ENCODE measurements at regions of chr10 and their contacts with region 1.

Region 1: GRCh38 chr10:45373576-45374349 is at the start of gene ALOX5:
- DNase-seq: peak; percentile 74
- ATAC-seq: peak; percentile 64
- H3K4me3 ChIP-seq: peak within 1 kb of the TSS; percentile 71 to 81 (median 77)
- H3K4me3 Mint-ChIP-seq: peak within 1 kb of the TSS; percentile 96
- H3K27ac ChIP-seq: peak within 1 kb of the TSS; percentile 78 to 89
- H3K27ac Mint-ChIP-seq: peak within 1 kb of the TSS; percentile 95
- H3K4me1 ChIP-seq: peaks cover 78 to 85% of the 10 kb centered on the region in 2 donors
- H3K4me1 Mint-ChIP-seq: peaks cover 89% of the 10 kb centered on the region
- H3K27me3 ChIP-seq: no peaks in the 10 kb centered on the region
- H3K27me3 Mint-ChIP-seq: no peaks in the 10 kb centered on the region
- CTCF ChIP-seq: no peak
- total RNA-seq, gene ALOX5: 351 and 354 TPM in 2 replicates

Region 2: DNA sequence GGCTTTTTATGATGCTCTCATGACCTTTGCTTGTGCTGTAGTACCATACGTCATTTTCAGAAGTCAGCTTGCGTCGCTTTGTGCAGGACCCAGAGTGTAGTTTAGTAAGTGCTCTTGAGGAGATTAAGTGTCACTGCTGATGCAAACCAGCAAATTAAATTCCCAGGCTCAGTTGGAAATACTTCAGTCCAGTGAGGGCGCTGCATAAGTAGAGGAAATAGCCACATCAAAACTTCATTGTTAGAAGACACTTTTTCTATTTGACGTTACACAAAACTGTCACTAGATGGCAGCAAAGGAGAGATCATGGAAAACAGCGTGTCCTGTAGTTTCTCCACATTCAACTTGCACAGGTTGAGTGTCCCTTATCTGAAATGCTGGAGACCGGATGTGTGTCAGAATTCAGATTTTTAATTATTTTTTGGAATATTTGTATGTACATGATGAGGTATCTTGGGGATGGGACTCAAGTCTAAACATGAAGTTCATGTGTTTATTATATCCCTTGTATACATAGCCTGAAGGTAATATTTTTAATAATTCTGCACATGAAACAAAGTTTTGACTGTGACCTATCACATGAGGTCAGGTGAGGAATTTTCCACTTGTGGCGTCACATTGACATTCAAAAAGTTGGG is 365.1 kb before region 1 on chr10:
- CTCF ChIA-PET with region 1: no interaction called
- POLR2A ChIA-PET with region 1: no interaction called
- intact Hi-C with region 1: loop called (anchors 10 kb)
- DNase-seq: peak; percentile 71
- ATAC-seq: peak; percentile 58
- H3K4me3 ChIP-seq: no peak overlapping the region
- H3K4me3 Mint-ChIP-seq: no peak overlapping the region
- H3K27ac ChIP-seq: no peak overlapping the region
- H3K27ac Mint-ChIP-seq: no peak overlapping the region
- H3K4me1 ChIP-seq: peaks cover 0 to 4% of the 10 kb centered on the region in 2 donors
- H3K4me1 Mint-ChIP-seq: peaks cover 2% of the 10 kb centered on the region
- H3K27me3 ChIP-seq: no peaks in the 10 kb centered on the region
- H3K27me3 Mint-ChIP-seq: no peaks in the 10 kb centered on the region
- CTCF ChIP-seq: peak; percentile 88

Region 3: GRCh38 chr10:45308707-45309106 is 65.1 kb before region 1 on chr10:
- CTCF ChIA-PET with region 1: no interaction called
- POLR2A ChIA-PET with region 1: no interaction called
- intact Hi-C with region 1: loop called (anchors 10 kb)
- DNase-seq: peak; percentile 28
- ATAC-seq: peak; percentile 17
- H3K4me3 ChIP-seq: no peak overlapping the region
- H3K4me3 Mint-ChIP-seq: no peak overlapping the region
- H3K27ac ChIP-seq: no peak overlapping the region
- H3K27ac Mint-ChIP-seq: no peak overlapping the region
- H3K4me1 ChIP-seq: no peaks in the 10 kb centered on the region
- H3K4me1 Mint-ChIP-seq: no peaks in the 10 kb centered on the region
- H3K27me3 ChIP-seq: no peaks in the 10 kb centered on the region
- H3K27me3 Mint-ChIP-seq: peaks cover 7% of the 10 kb centered on the region
- CTCF ChIP-seq: peak; percentile 24

Region 4: GRCh38 chr10:45420453-45421192 is 46.9 kb after region 1 on chr10:
- CTCF ChIA-PET with region 1: no interaction called
- POLR2A ChIA-PET with region 1: interaction called, 5 read pairs
- intact Hi-C with region 1: loop called (anchors 1 kb)
- DNase-seq: peak; percentile 72
- ATAC-seq: peak; percentile 54
- H3K4me3 ChIP-seq: peak overlapping the region; percentile 15 to 75 (median 32)
- H3K4me3 Mint-ChIP-seq: peak overlapping the region; percentile 97
- H3K27ac ChIP-seq: peak overlapping the region; percentile 84 to 85
- H3K27ac Mint-ChIP-seq: peak overlapping the region; percentile 94
- H3K4me1 ChIP-seq: peaks cover 49 to 60% of the 10 kb centered on the region in 2 donors
- H3K4me1 Mint-ChIP-seq: peaks cover 67% of the 10 kb centered on the region
- H3K27me3 ChIP-seq: no peaks in the 10 kb centered on the region
- H3K27me3 Mint-ChIP-seq: no peaks in the 10 kb centered on the region
- CTCF ChIP-seq: no peak

Region 5: GRCh38 chr10:45672181-45673073 is 298.7 kb after region 1 on chr10 and contains the start of gene ZFAND4:
- CTCF ChIA-PET with region 1: interaction called, 3 read pairs
- POLR2A ChIA-PET with region 1: no interaction called
- intact Hi-C with region 1: loop called (anchors 2 kb)
- DNase-seq: peak; percentile 97
- ATAC-seq: peak; percentile 94
- H3K4me3 ChIP-seq: peak within 1 kb of the TSS; percentile 48 to 85 (median 75)
- H3K4me3 Mint-ChIP-seq: peak within 1 kb of the TSS; percentile 92
- H3K27ac ChIP-seq: peak within 1 kb of the TSS; percentile 85 to 90
- H3K27ac Mint-ChIP-seq: peak within 1 kb of the TSS; percentile 92
- H3K4me1 ChIP-seq: peaks cover 7 to 14% of the 10 kb centered on the region in 2 donors
- H3K4me1 Mint-ChIP-seq: peaks cover 30% of the 10 kb centered on the region
- H3K27me3 ChIP-seq: no peaks in the 10 kb centered on the region
- H3K27me3 Mint-ChIP-seq: no peaks in the 10 kb centered on the region
- CTCF ChIP-seq: peak; percentile 72
- total RNA-seq, gene ZFAND4: 23.4 and 25.1 TPM in 2 replicates